Head of caudate nucleus (tissue), 42 donors: ENCODE measurements at regions of chr12 and their contacts with region 1.

Region 1: DNA sequence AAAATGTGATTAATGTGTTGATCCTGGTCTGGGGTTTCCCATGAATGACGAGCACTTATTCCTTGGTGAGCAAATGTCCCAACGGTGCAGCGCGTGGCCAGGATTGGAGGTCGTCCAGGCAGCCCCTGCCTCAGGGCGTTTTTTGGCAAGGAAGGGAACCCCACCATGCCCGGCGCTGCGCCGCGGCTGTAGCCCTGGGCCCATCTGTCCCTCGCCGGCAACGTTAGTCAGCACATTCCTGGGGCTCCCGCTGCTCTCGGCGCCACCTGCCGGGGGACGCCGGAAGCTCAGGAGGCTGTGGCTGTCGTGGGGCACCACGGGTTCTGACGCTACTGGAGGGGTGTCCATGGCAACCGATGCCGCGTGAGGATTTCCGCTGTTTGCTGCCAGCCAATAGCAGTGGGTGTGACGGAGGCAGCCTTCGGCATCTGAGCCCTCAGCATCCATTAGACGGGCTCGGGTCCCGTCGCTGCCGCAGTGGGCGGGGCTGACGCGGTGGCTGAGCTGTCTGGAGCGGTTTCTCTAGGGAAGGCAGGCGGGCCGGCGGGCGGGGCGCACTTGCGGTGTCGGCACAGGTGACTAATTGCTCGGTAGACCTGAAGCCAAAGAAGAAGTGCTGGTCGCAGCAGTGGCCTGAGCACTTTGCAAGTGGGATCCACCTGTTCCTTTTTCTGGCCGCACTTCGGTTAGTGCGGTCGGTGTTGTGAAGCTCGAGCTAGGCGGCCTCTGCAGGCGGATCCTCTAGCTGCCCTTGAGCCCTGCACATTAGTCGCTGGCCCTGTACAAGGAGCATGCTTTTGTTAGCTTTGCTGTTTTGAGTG is 29.5 kb downstream of the RAB35 start:
- DNase-seq: peak; percentile 99 to 100 (median 100)

Region 2: DNA sequence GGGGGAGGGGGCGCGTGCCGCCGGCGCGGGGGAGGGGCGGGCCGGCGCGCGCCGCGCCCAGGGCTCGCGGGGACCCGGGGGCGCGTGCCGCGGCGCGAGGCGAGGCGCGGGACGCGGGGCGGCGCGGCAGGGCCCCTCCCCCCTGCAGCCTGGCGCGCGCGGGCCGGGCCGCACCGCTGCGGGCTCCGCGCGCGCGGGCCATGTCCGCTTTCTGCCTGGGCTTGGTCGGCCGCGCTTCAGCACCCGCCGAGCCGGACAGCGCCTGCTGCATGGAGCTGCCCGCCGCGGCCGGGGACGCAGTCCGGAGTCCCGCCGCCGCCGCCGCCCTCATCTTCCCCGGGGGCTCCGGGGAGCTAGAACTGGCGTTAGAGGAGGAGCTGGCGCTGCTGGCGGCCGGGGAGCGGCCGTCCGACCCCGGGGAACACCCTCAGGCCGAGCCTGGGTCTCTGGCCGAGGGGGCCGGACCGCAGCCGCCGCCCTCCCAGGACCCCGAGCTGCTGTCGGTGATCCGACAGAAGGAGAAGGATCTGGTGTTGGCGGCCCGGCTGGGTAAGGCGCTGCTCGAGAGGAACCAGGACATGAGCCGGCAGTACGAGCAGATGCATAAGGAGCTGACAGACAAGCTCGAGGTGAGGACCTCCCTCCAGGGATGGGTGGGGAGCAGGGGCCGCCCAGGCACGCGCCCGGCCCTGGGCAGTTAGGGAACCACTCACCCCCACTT is 97.2 kb before region 1 on chr12:
- intact Hi-C with region 1: loop called (anchors 10 kb)
- DNase-seq: peak in 40 of 42 donors; percentile 4 to 86 (median 64)

Region 3: GRCh38 chr12:120041386-120042231 is 45.4 kb before region 1 on chr12:
- intact Hi-C with region 1: no loop called
- DNase-seq: peak in 30 of 42 donors; percentile 7 to 84 (median 36)

Region 4: GRCh38 chr12:120156315-120157259 is 69.6 kb after region 1 on chr12:
- intact Hi-C with region 1: no loop called
- DNase-seq: no peak